ENCODE measurements at regions of chr11 and their contacts with region 1.

Region 1: DNA sequence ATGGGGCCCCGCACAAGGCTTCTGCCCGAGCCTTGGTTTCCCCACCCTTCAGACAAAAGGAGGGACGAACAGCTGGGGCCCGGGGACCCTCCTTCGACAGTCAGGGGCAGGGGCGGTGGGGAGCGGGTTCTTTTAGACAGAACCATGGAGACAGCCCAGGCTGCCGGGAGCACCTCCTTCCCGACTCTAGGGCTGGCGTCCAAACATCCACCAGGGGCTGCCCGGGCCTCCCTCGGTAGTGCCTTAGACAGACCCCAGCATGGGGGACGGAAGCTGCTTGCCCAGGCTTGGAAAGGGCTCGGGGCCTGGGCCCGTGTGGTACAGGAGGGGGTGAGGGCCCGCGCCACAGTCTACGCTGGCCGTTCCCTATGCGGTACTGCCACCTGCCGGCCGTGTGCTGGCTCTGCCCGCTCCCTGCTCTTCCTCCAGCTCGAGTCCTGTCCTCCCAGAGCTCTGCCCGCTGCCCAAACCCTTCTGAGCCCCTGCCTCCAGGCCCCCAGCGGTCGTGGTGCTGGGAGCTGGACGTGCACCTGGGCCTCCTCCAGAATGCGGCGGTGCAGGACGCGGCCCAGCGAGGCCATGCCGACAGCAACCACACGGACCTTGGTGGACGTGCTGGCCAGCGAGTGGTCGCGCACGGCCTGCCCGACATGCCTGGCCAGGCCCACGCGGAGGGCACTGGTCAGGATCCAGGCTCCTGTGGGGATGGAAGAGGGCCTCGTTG is 20.1 kb downstream of the TSSC4 start:
- DNase-seq: no peak
- H3K4me3 ChIP-seq: no peak overlapping the region
- CTCF ChIP-seq: peak; percentile 94

Region 2: DNA sequence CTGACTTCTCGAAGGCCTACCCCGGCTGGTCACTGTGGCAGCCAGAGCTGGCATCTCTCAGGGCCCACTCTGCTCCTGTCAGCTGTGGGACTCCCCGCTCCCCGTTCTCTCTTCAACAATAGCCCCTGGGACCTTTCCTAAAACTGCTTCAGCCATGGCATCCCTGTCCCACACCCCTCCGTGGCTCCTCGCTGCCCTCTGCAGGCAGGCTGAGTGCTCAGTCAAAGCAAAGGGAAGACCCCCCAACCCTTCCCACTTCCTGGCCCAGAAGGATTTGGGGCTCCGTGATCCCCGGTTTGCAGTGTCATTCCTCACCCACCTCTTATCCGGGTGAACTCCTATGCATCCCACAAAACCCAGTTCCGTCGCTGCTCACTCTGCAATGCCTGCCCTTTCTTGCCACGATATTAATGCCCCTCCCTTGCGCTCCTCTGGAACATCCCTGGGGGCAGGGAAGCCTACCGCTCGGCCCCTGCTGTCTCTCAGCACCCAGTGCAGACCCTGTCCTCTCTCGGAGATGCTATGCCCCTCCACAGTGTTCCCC is 247.4 kb before region 1 on chr11:
- CTCF ChIA-PET with region 1: interaction called, 33 read pairs
- POLR2A ChIA-PET with region 1: no interaction called
- DNase-seq: no peak
- H3K4me3 ChIP-seq: no peak overlapping the region
- CTCF ChIP-seq: peak; percentile 46

Region 3: DNA sequence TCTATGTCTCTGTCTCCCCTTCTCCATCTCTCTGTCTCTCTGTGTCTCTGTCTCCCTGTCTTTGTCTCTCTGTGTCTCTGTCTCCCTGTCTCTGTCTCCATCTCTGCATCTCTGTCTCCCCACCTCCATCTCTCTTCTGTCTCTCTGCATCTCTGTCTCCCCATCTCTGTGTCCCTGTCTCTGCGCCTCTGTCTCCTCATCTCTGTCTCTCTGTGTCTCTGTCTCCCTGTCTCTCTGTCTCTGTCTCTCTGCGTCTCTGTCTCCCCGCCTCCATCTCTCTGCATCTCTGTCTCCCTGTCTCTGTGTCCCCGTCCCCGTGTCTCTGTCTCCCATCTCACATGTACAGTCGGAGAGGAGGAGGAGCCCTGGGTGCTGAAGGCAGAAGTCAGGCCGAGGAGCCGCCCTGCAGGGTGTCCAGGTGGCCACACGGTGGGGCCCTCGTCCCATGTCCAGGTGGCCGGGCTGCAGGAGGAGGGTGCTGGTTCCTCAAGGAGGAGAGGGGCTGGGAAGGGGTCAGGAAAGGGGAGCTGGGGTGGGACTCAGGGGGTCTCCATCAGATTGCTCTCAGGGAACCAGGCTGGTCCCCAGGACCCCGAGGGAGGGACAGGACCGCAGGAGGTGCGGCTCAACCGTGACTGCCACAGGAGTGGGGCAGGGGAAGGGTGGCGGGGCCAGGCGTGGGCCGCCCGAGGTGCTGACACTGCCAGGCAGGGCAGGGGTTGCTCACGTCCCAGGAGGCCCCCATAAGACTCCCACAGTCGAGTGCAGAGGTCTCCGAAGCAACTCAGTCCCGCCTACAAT is 223.5 kb before region 1 on chr11:
- CTCF ChIA-PET with region 1: interaction called, 216 read pairs
- POLR2A ChIA-PET with region 1: interaction called, 4 read pairs
- DNase-seq: no peak
- H3K4me3 ChIP-seq: no peak overlapping the region
- CTCF ChIP-seq: peak; percentile 98

Region 4: GRCh38 chr11:2298795-2299761 is 121.6 kb before region 1 on chr11:
- CTCF ChIA-PET with region 1: interaction called, 381 read pairs
- POLR2A ChIA-PET with region 1: no interaction called
- DNase-seq: no peak
- H3K4me3 ChIP-seq: no peak overlapping the region
- CTCF ChIP-seq: peak; percentile 18

Region 5: GRCh38 chr11:2400069-2400760 is 20.4 kb before region 1 on chr11 and contains the start of gene TSSC4:
- CTCF ChIA-PET with region 1: interaction called, 70 read pairs
- POLR2A ChIA-PET with region 1: no interaction called
- DNase-seq: peak; percentile 99
- H3K4me3 ChIP-seq: peak within 1 kb of the TSS; percentile 99
- CTCF ChIP-seq: peak; percentile 99

Region 6: GRCh38 chr11:2532704-2533586 is 112.3 kb after region 1 on chr11:
- CTCF ChIA-PET with region 1: interaction called, 226 read pairs
- POLR2A ChIA-PET with region 1: no interaction called
- DNase-seq: peak; percentile 28
- H3K4me3 ChIP-seq: peak overlapping the region; percentile 23
- CTCF ChIP-seq: peak; percentile 95

Measured in AG04449 (cell line).